Naive thymus-derived CD8-positive, alpha-beta T cell (primary cell): ENCODE measurements at regions of chr19 and their contacts with region 1.

Region 1: DNA sequence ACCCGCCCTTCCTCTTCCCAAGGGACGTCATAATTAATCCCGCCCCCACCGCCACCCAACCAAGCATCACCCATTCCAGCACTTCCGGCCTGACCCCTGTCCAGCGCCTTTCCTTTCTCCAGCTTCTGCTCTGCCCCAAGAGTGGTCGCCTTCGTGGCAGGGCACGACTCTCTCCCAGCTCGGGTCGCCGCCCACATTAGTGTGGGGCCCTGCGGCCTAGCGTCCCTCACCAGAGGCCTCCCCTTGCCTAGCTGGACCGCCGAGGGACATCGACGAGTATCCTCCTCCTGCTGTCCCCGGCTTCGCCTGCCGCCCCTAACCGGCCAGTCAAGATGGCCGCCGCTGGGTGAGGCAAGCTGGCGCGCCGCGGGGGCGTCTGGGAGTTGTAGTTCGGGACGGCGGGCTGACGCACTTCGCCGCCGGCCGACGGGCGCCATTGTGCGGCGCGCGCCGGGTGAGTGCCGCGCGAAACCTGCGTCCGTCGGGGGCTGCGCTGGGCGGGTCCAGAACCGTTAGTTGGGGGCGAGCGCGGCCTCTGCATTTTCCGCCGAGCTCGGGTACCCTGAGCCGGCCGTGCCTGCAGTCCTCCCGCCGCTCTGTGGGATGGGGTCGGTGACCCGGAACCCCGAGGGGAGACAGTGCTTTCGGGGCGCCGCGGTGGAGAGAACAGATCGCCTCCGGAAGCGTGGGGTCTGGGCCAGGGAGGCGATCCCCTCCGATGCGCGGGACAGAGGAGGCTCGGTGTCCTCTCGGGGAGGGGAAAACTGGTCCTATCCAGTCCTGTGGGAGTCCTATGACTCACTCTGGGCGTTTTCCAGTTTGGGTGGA is at the start of gene ZNF274:
- DNase-seq: peak; percentile 85 to 96 (median 94)
- ATAC-seq: peak; percentile 87 to 91
- H3K4me3 Mint-ChIP-seq: peak within 1 kb of the TSS; percentile 87 to 98 (median 90)
- H3K27ac Mint-ChIP-seq: peak within 1 kb of the TSS; percentile 96 to 100 (median 99)
- H3K4me1 Mint-ChIP-seq: peaks cover 11 to 31% (median 22%) of the 10 kb centered on the region in 4 donors
- H3K27me3 Mint-ChIP-seq: no peaks in the 10 kb centered on the region
- polyA plus RNA-seq, gene ZNF274: 26.5 to 38.7 (median 34.9) TPM

Region 2: DNA sequence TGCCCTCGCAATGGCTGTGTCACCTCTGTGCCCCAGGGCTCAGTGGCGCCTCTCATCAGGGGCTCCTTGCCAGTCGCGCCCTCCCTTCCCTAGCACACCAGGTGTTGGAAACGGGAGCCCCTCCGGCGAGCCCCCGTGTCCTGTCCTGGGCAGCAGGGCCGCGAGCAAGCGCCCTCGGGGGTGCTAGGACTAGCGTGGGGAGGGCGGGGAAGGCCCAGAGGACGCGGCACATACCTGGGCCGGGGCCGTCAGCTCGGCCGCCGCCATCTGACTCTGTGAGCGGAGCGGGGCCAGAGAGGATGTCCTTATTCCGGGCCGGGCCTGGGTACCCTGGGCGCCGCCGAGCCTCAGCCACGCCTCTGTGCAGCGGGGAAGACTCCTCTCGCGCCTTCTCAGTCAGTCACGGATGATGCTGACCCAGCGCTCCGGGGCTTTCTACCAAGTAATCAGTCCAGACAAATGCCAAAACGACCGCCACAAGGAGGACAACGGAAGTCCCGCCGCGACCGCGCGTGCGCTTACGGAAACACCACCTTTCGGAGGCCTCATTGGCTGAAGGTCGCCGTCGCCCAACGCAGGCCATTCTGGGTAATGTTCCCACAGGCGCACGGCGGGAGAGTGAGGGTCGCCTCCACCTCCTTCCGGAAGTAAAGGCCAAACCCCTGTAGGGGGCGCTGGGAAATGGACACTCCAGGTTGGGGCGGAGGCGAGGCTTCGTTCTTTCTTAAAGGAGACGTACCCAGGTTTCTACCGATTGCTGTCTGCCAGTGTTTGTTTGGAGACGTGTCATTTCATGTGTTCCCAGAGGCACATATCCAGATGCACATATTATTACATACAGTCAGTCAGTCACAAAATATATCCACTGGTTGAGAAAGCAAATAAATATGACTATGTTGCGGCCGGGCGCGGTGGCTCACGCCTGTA is 235.7 kb before region 1 on chr19 and contains the start of gene ZNF256:
- POLR2A ChIA-PET with region 1: no interaction called
- DNase-seq: peak; percentile 71 to 96 (median 86)
- ATAC-seq: peak; percentile 93 to 96
- H3K4me3 Mint-ChIP-seq: peak within 1 kb of the TSS; percentile 90 to 97 (median 95)
- H3K27ac Mint-ChIP-seq: peak within 1 kb of the TSS; percentile 90 to 97 (median 94)
- H3K4me1 Mint-ChIP-seq: peaks cover 16 to 28% (median 20%) of the 10 kb centered on the region in 4 donors
- H3K27me3 Mint-ChIP-seq: no peaks in the 10 kb centered on the region
- polyA plus RNA-seq, gene ZNF256: 4.5 to 6.2 (median 4.9) TPM

Region 3: GRCh38 chr19:58059003-58059670 is 124.1 kb before region 1 on chr19 and contains the start of gene ZNF135:
- POLR2A ChIA-PET with region 1: interaction called, 17 read pairs
- DNase-seq: peak; percentile 42 to 91 (median 72)
- ATAC-seq: peak; percentile 94 to 95
- H3K4me3 Mint-ChIP-seq: peak within 1 kb of the TSS; percentile 77 to 91 (median 86)
- H3K27ac Mint-ChIP-seq: peak within 1 kb of the TSS; percentile 60 to 97 (median 90)
- H3K4me1 Mint-ChIP-seq: peaks cover 6 to 12% (median 8%) of the 10 kb centered on the region in 4 donors
- H3K27me3 Mint-ChIP-seq: peaks cover 5 to 28% (median 17%) of the 10 kb centered on the region in 5 donors
- polyA plus RNA-seq, gene ZNF135: 0.79 to 4.3 (median 3.8) TPM

Region 4: DNA sequence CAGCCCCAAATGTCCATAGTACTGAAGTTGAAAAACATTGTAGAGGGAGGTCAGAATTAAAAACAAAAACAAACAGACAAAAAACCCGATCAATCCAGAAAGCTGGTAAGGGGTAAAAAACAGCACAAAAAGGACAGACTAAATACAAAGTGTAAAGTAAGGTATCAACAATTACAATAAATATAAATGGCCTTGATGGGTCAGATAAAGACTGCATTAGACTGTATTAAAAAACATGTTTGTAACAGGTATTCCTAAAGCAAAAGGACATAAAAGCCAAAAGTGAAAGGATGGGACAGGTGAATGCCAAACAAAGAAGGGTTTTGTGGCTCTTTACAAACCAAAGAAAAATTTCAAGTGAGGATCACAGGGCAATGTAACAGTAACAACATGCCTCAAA is 49.0 kb before region 1 on chr19:
- POLR2A ChIA-PET with region 1: no interaction called
- DNase-seq: no peak
- ATAC-seq: no peak
- H3K4me3 Mint-ChIP-seq: peak overlapping the region in 1 of 10 donors; percentile 58
- H3K27ac Mint-ChIP-seq: no peak overlapping the region
- H3K4me1 Mint-ChIP-seq: peaks cover 0 to 2% (median 0%) of the 10 kb centered on the region in 4 donors
- H3K27me3 Mint-ChIP-seq: no peaks in the 10 kb centered on the region

Region 5: DNA sequence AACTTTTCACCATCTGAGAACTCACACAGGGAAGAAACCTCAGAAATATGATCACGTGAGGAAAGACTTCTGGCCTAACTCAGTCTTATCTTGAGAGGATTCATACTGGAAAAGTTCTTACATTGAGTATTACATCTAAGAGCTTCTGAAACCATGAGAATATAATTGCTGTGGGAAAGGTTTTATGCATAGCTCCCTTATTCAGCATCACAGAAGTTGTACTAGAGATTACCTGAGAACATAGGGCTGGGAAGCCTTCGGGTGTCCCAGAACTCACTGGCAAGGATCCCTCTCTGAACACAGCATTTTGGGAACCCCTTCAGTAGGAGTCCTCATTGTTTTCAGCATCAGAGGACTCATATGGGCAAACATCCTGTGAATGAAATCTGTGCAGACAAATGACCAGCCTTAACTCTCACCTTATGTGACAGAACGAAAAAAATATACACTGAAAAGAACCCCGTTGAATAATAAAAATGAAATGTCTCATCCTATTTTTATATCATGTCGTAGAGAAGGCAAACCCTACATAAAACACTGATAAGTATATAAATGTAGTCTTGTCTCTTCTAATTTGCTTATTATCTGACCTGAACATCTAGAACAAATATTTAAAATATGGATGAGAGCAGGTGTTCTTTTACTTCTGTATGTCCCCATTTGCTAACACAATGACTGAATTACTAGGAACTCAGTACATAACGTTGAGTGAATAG is 13.9 kb after region 1 on chr19:
- POLR2A ChIA-PET with region 1: interaction called, 36 read pairs
- DNase-seq: peak in 3 of 10 donors; percentile 28 to 42 (median 28)
- ATAC-seq: no peak
- H3K4me3 Mint-ChIP-seq: peak overlapping the region in 2 of 10 donors; percentile 16 to 39
- H3K27ac Mint-ChIP-seq: peak overlapping the region in 1 of 10 donors; percentile 31
- H3K4me1 Mint-ChIP-seq: peaks cover 0 to 4% (median 1%) of the 10 kb centered on the region in 4 donors
- H3K27me3 Mint-ChIP-seq: no peaks in the 10 kb centered on the region

Region 6: DNA sequence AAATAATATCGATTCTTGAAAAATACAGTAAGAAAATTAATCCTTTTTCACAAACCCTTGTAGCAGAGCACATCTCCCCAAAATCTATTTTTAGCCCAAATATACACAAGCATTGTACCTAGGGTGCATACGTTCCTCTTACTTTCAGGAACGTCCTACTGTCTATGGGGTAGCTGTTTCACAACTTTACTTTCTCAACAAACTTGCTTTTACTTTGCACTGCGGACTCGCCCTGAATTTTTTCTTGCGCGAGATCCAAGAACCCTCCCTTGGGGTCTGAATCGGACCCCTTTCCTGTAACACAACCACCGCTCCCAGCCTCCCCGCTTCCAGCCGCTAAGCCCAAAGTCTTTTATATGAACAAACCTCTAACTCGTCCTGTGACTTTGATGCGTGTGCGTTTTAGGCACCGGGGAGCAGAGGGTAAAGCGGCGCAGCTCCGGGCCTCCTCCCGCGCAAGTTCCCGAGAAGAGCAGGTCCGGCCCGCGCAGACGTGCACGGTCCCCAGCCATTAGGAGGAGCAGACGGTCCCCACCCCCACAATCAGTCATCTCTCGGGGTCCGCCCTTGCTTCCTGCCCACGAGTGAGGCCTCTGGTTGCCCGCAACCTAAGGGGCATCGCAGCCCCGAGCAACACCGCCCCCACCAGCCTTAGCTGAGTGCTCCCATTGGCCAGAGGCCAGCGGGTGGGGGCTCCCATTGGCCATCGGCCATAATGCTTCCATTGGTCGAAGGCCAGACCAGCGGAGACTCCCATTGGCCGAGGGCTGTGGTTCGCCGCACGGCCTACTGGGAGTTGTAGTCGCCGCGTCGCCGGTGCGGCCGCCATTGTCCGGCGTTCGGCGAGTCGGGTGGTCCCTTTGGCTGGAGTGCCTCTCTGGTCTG is 95.2 kb after region 1 on chr19 and contains the start of gene ZNF8:
- POLR2A ChIA-PET with region 1: interaction called, 23 read pairs
- DNase-seq: peak; percentile 90 to 98 (median 94)
- ATAC-seq: peak; percentile 97
- H3K4me3 Mint-ChIP-seq: peak within 1 kb of the TSS; percentile 89 to 99 (median 96)
- H3K27ac Mint-ChIP-seq: peak within 1 kb of the TSS; percentile 91 to 99 (median 96)
- H3K4me1 Mint-ChIP-seq: peaks cover 24 to 58% (median 49%) of the 10 kb centered on the region in 4 donors
- H3K27me3 Mint-ChIP-seq: no peaks in the 10 kb centered on the region
- polyA plus RNA-seq, gene ZNF8: 0.44 to 1.1 (median 0.75) TPM